ENCODE measurements at regions of chr6 and their contacts with region 1.

Region 1: GRCh38 chr6:120056085-120056484 is 706.5 kb upstream of the MAN1A1 start:
- DNase-seq: peak; percentile 33 to 70
- H3K4me3 ChIP-seq: no peak overlapping the region
- H3K27ac ChIP-seq: no peak overlapping the region
- H3K4me1 ChIP-seq: no peaks in the 10 kb centered on the region
- H3K27me3 ChIP-seq: no peaks in the 10 kb centered on the region
- CTCF ChIP-seq: peak; percentile 50 to 91 (median 82)
- EP300 ChIP-seq: no peak
- POLR2A ChIP-seq: no peak
- RAD21 ChIP-seq: peak; percentile 60 to 73

Region 2: DNA sequence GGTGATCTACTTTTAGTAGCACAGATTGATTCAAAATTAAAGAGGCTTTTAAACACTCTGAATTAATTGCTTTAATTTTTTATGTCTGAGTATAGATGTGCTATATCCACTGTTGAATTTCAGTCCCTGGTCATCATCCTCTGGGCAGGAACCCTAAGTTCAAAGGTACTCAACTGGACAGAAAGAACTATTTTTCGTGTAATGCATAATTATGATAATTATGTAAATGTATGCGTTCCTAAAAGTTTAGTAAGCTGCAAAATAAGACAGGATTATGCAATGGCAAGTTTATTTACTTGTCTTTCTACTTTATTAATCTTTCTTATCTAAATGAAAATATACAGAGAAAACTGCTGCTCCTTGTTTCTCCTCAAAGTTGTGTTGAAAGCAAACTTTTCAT is 16.4 kb before region 1 on chr6:
- CTCF ChIA-PET with region 1: interaction called, 20 read pairs
- POLR2A ChIA-PET with region 1: no interaction called
- DNase-seq: no peak
- H3K4me3 ChIP-seq: no peak overlapping the region
- H3K27ac ChIP-seq: no peak overlapping the region
- H3K4me1 ChIP-seq: no peaks in the 10 kb centered on the region
- H3K27me3 ChIP-seq: no peaks in the 10 kb centered on the region
- CTCF ChIP-seq: no peak
- EP300 ChIP-seq: no peak
- POLR2A ChIP-seq: no peak
- RAD21 ChIP-seq: no peak